H1 (cell line): ENCODE measurements at regions of chr7 and their contacts with region 1.

Region 1: GRCh38 chr7:123635551-123636359 is 19.9 kb upstream of the LMOD2 start:
- DNase-seq: no peak
- H3K4me3 ChIP-seq: no peak overlapping the region
- H3K27ac ChIP-seq: no peak overlapping the region
- H3K4me1 ChIP-seq: no peaks in the 10 kb centered on the region
- H3K27me3 ChIP-seq: no peaks in the 10 kb centered on the region
- CTCF ChIP-seq: peak in 2 of 3 experiments; percentile 52 to 65; a peak in 3 of 4 replicates
- EP300 ChIP-seq: no peak
- POLR2A ChIP-seq: no peak
- RAD21 ChIP-seq: peak; percentile 91 to 92

Region 2: GRCh38 chr7:123557398-123558288 is 78.1 kb before region 1 on chr7 and contains the start of gene NDUFA5:
- CTCF ChIA-PET with region 1: no interaction called
- POLR2A ChIA-PET with region 1: no interaction called
- DNase-seq: peak; percentile 91 to 93
- H3K4me3 ChIP-seq: peak within 1 kb of the TSS; percentile 97 to 100 (median 98)
- H3K27ac ChIP-seq: peak within 1 kb of the TSS; percentile 77
- H3K4me1 ChIP-seq: peaks cover 0 to 6% (median under 1%) of the 10 kb centered on the region in 4 experiments; a peak in 2 of 7 replicates
- H3K27me3 ChIP-seq: no peaks in the 10 kb centered on the region
- CTCF ChIP-seq: no peak
- EP300 ChIP-seq: no peak
- POLR2A ChIP-seq: peak in 1 of 2 experiments; percentile 62; a peak in 2 of 3 replicates
- RAD21 ChIP-seq: no peak
- total RNA-seq, gene NDUFA5: 74.9 and 76.3 TPM in 2 replicates

Region 3: GRCh38 chr7:123580406-123581161 is 55.2 kb before region 1 on chr7:
- CTCF ChIA-PET with region 1: interaction called, 16 read pairs
- POLR2A ChIA-PET with region 1: no interaction called
- DNase-seq: no peak
- H3K4me3 ChIP-seq: no peak overlapping the region
- H3K27ac ChIP-seq: no peak overlapping the region
- H3K4me1 ChIP-seq: peaks cover 0 to 3% (median 0%) of the 10 kb centered on the region in 4 experiments; a peak in 4 of 7 replicates
- H3K27me3 ChIP-seq: no peaks in the 10 kb centered on the region
- CTCF ChIP-seq: peak in 2 of 3 experiments; percentile 77 to 86; a peak in 3 of 4 replicates
- EP300 ChIP-seq: no peak
- POLR2A ChIP-seq: no peak
- RAD21 ChIP-seq: peak; percentile 90

Region 4: DNA sequence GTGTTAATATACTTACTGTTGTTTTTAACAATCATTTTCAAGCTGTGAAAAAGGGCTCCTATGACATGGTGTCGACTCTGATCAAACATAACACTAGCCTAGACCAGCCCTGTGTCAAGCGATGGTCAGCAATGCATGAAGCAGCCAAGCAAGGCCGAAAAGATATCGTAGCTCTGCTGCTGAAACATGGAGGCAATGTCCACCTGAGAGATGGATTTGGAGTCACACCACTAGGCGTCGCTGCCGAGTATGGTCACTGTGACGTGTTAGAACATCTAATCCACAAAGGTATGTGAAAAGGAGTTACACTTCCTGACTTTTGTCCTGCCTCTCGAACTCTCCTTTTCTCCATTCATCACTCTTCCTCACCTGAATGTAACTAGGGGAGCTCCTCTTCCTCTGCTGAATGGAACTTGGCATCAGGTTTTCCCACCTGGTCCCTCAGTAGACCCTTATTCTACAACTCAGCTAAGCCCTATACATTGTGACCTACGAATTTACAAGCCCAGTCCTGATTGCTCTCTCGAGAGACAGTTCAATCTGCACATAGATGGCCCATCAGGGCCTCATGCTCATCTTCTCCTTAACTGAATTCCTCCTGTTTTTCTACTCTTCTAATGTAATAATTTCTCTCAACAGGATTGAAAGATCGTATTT is 11.1 kb before region 1 on chr7:
- CTCF ChIA-PET with region 1: interaction called, 16 read pairs
- POLR2A ChIA-PET with region 1: no interaction called
- DNase-seq: peak; percentile 36 to 83
- H3K4me3 ChIP-seq: no peak overlapping the region
- H3K27ac ChIP-seq: no peak overlapping the region
- H3K4me1 ChIP-seq: no peaks in the 10 kb centered on the region; a peak in 1 of 7 replicates
- H3K27me3 ChIP-seq: no peaks in the 10 kb centered on the region
- CTCF ChIP-seq: peak; percentile 62 to 98 (median 75)
- EP300 ChIP-seq: no peak
- POLR2A ChIP-seq: no peak
- RAD21 ChIP-seq: peak; percentile 44 to 51; a peak in 3 of 4 replicates

Region 5: GRCh38 chr7:123674399-123675180 is 38.8 kb after region 1 on chr7:
- CTCF ChIA-PET with region 1: interaction called, 11 read pairs
- POLR2A ChIA-PET with region 1: no interaction called
- DNase-seq: no peak
- H3K4me3 ChIP-seq: no peak overlapping the region
- H3K27ac ChIP-seq: no peak overlapping the region
- H3K4me1 ChIP-seq: 0 out of 7 replicates have a peak, but pooled peaks cover 0 to under 1% (median 0%) of the 10 kb centered on the region in 4 experiments
- H3K27me3 ChIP-seq: peaks cover 0 to 1% (median 0%) of the 10 kb centered on the region in 4 experiments; a peak in 1 of 7 replicates
- CTCF ChIP-seq: no peak
- EP300 ChIP-seq: no peak
- POLR2A ChIP-seq: no peak
- RAD21 ChIP-seq: no peak

Region 6: GRCh38 chr7:123692471-123692877 is 56.7 kb after region 1 on chr7:
- CTCF ChIA-PET with region 1: interaction called, 10 read pairs
- POLR2A ChIA-PET with region 1: no interaction called
- DNase-seq: peak in 1 of 2 experiments; percentile 55
- H3K4me3 ChIP-seq: no peak overlapping the region
- H3K27ac ChIP-seq: no peak overlapping the region
- H3K4me1 ChIP-seq: peaks cover 0 to 3% (median 1%) of the 10 kb centered on the region in 4 experiments; a peak in 3 of 7 replicates
- H3K27me3 ChIP-seq: no peaks in the 10 kb centered on the region
- CTCF ChIP-seq: no peak
- EP300 ChIP-seq: 0 out of 3 replicates have a peak, but pooled peaks of 1 of the 2 experiments have one; percentile 7
- POLR2A ChIP-seq: no peak
- RAD21 ChIP-seq: no peak

Region 7: GRCh38 chr7:123797673-123798527 is 162.1 kb after region 1 on chr7:
- CTCF ChIA-PET with region 1: interaction called, 11 read pairs
- POLR2A ChIA-PET with region 1: no interaction called
- DNase-seq: peak in 1 of 2 experiments; percentile 31
- H3K4me3 ChIP-seq: no peak overlapping the region
- H3K27ac ChIP-seq: no peak overlapping the region
- H3K4me1 ChIP-seq: peaks cover 0 to 3% (median 1%) of the 10 kb centered on the region in 4 experiments; a peak in 2 of 7 replicates
- H3K27me3 ChIP-seq: no peaks in the 10 kb centered on the region
- CTCF ChIP-seq: peak in 2 of 3 experiments; percentile 28 to 46; a peak in 2 of 4 replicates
- EP300 ChIP-seq: no peak
- POLR2A ChIP-seq: no peak
- RAD21 ChIP-seq: peak; percentile 72 to 79

Region 8: DNA sequence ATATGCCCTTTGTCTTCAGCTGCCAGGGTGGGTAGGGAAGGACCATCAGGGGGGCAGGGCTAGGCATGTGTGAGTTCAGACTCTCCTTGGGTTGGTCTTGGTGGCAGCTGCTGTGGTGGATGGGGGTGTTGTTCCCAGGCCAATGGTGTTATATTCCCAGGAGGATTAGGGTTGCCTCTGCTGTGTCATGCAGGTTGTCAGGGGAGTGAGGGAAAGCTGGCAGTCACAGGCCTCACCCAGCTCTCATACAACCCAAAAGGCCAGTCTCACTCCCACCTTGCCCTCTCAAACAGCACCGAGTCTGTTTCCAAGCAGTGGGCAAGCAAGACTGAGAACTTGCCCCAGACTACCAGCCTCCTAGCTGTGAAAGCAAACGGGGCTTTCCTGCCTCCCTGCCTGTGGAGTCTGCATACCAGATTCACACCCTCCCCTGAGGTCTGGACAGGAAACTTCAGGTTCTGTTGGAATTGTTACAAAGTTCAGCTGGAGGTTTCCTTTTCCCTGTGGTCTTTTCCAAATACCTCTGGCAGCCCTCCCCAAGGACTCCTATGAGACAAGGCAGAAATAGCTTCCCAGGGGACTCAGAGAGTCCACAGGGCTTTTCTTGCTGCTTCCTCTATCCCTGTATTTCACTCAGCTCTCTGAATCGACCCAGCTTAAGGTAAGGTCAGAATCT is 210.6 kb after region 1 on chr7:
- CTCF ChIA-PET with region 1: no interaction called
- POLR2A ChIA-PET with region 1: no interaction called
- DNase-seq: no peak
- H3K4me3 ChIP-seq: no peak overlapping the region
- H3K27ac ChIP-seq: no peak overlapping the region
- H3K4me1 ChIP-seq: no peaks in the 10 kb centered on the region
- H3K27me3 ChIP-seq: no peaks in the 10 kb centered on the region
- CTCF ChIP-seq: no peak
- EP300 ChIP-seq: no peak
- POLR2A ChIP-seq: no peak
- RAD21 ChIP-seq: no peak

Region 9: DNA sequence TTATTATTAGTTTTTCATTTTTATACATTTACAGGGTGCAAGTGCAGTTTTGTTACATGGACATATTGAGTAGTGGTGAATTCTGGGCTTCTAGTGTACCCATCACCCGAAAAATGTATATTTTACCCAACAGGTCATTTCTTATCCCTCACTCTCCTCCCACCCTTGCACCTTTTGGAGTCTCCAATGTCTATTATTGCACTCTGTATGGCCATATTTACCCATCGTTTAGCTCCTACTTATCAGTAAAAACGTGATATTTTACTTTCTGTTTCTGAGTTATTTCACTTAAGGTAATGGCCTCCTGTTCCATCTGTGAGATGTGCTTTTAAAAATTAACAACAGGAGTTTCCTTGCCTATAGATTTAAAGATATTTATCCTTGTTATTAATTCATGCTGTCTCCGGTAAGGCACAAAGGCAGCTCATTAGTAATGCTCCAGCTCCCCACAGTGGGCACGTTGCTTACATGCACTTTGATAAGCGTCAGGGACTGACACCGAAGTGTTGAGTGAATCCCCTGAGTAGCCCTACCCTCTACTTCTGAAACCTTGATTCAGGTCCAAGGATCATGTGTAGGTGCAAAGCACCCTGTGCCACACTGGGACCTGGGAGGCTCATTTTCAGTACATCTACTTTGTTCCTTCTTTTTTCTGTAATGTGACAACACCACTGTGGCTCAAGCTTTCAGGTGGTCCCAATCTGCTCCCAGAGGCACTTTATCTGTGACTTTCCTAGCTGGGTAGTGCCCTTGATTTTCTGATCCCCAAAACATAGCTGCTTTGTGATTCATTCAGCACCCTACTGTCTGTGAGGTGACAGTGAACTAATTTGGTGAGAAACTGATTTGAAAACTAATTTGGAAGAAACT is 236.5 kb after region 1 on chr7:
- CTCF ChIA-PET with region 1: interaction called, 26 read pairs
- POLR2A ChIA-PET with region 1: interaction called, 4 read pairs
- DNase-seq: peak; percentile 21 to 58
- H3K4me3 ChIP-seq: no peak overlapping the region
- H3K27ac ChIP-seq: no peak overlapping the region
- H3K4me1 ChIP-seq: no peaks in the 10 kb centered on the region
- H3K27me3 ChIP-seq: no peaks in the 10 kb centered on the region
- CTCF ChIP-seq: peak; percentile 54 to 80 (median 66)
- EP300 ChIP-seq: no peak
- POLR2A ChIP-seq: no peak
- RAD21 ChIP-seq: peak; percentile 94 to 95